K562 (cell line): ENCODE measurements at regions of chrX and their contacts with region 1.

Region 1: DNA sequence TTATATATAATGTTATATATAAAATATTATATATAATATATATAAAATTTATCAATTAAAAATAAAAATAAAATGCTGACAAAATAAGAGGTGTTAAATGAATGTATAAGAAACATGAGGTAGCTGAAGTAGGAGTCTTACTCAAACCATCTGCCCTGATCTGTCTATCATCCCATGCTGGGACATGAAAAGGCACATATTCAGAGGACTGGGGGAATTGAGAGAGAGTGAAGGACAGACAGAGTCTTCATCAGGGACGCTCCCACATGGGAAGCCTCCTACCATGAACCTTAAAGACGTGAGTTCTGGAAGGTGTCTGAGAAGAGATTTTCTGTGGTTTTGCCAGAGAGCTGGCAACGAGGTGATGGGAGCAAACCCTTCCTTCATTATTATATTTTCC is 4.1 kb upstream of the ARSF start:
- DNase-seq: no peak
- ATAC-seq: no peak
- H3K4me3 ChIP-seq: no peak overlapping the region
- H3K27ac ChIP-seq: no peak overlapping the region
- H3K4me1 ChIP-seq: no peaks in the 10 kb centered on the region
- H3K27me3 ChIP-seq: no peaks in the 10 kb centered on the region; a peak in 1 of 5 replicates
- CTCF ChIP-seq: no peak
- EP300 ChIP-seq: no peak
- POLR2A ChIP-seq: no peak
- RAD21 ChIP-seq: no peak

Region 2: GRCh38 chrX:1591102-1591900 is 1445.9 kb before region 1 on chrX and contains the start of gene AKAP17A:
- CTCF ChIA-PET with region 1: no interaction called
- POLR2A ChIA-PET with region 1: no interaction called
- in situ Hi-C with region 1: no loop called
- intact Hi-C with region 1: no loop called
- DNase-seq: peak; percentile 89 to 93 (median 92)
- ATAC-seq: peak; percentile 96
- H3K4me3 ChIP-seq: peak within 1 kb of the TSS; percentile 84
- H3K27ac ChIP-seq: peak within 1 kb of the TSS; percentile 68
- H3K4me1 ChIP-seq: peaks cover 0 to 35% of the 10 kb centered on the region in 2 experiments; a peak in 2 of 5 replicates
- H3K27me3 ChIP-seq: no peaks in the 10 kb centered on the region
- CTCF ChIP-seq: peak in 1 of 3 experiments; percentile 19; a peak in 1 of 6 replicates
- EP300 ChIP-seq: no peak
- POLR2A ChIP-seq: no peak; the same call in 1 of the 2 replicates
- RAD21 ChIP-seq: no peak
- polyA plus RNA-seq, gene AKAP17A: 1.2 to 1.3 TPM

Region 3: DNA sequence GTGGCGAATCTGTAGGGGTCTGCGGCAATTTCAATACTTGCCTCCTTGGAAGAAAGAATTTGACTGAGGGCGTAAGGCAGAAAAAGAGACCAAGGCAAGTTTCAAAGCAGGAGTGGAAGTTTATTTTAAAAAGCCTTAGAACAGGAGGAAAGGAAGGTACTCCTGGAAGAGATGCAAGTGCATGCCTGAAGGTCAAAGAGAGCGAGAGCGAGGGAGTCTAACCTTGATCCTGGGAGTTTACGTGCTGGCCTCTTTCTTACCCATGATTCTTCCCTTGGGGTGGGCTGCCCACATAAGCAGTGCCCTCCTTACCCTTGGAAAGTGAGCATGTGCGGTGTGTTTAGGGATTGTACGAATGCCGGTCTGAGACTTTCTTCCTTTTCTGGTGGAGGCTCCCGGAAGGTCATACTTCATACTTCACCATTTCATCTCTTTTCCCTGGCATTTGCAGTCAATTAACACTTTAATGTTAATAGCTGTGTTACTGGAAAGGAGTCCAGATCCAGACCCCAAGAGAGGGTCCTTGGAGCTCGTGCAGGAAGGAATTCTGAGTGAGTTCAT is 148.1 kb before region 1 on chrX:
- CTCF ChIA-PET with region 1: no interaction called
- POLR2A ChIA-PET with region 1: no interaction called
- in situ Hi-C with region 1: no loop called
- intact Hi-C with region 1: loop called (anchors 10 kb)
- DNase-seq: no peak
- ATAC-seq: no peak
- H3K4me3 ChIP-seq: peak overlapping the region; percentile 16; the same call in 1 of the 2 replicates
- H3K27ac ChIP-seq: peak overlapping the region; percentile 84
- H3K4me1 ChIP-seq: peaks cover 10 to 18% of the 10 kb centered on the region in 2 experiments; a peak in 4 of 5 replicates
- H3K27me3 ChIP-seq: no peaks in the 10 kb centered on the region
- CTCF ChIP-seq: no peak
- EP300 ChIP-seq: no peak
- POLR2A ChIP-seq: no peak
- RAD21 ChIP-seq: no peak

Region 4: DNA sequence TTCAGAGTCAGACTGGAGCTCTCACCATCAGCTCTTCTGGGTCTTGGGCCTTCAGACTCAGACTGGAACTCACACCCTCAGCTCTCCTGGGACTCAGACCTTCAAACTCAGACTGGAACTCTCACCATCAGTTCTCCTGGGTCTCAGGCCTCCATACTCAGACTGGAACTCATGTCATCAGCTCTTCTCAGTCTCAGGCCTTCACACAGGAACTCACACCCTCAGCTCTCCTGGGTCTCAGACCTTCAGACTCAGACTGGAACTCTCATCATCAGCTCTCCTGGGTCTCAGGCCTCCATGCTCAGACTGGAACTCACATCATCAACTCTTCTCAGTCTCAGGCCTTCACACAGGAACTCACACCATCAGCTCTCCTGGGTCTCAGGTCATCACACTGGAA is 456.4 kb after region 1 on chrX:
- CTCF ChIA-PET with region 1: no interaction called
- POLR2A ChIA-PET with region 1: no interaction called
- in situ Hi-C with region 1: no loop called
- intact Hi-C with region 1: no loop called
- DNase-seq: no peak
- ATAC-seq: no peak
- H3K4me3 ChIP-seq: no peak overlapping the region
- H3K27ac ChIP-seq: no peak overlapping the region
- H3K4me1 ChIP-seq: no peaks in the 10 kb centered on the region
- H3K27me3 ChIP-seq: no peaks in the 10 kb centered on the region
- CTCF ChIP-seq: no peak
- EP300 ChIP-seq: no peak
- POLR2A ChIP-seq: no peak
- RAD21 ChIP-seq: no peak